ENCODE measurements at regions of chr3 and their contacts with region 1.

Region 1: DNA sequence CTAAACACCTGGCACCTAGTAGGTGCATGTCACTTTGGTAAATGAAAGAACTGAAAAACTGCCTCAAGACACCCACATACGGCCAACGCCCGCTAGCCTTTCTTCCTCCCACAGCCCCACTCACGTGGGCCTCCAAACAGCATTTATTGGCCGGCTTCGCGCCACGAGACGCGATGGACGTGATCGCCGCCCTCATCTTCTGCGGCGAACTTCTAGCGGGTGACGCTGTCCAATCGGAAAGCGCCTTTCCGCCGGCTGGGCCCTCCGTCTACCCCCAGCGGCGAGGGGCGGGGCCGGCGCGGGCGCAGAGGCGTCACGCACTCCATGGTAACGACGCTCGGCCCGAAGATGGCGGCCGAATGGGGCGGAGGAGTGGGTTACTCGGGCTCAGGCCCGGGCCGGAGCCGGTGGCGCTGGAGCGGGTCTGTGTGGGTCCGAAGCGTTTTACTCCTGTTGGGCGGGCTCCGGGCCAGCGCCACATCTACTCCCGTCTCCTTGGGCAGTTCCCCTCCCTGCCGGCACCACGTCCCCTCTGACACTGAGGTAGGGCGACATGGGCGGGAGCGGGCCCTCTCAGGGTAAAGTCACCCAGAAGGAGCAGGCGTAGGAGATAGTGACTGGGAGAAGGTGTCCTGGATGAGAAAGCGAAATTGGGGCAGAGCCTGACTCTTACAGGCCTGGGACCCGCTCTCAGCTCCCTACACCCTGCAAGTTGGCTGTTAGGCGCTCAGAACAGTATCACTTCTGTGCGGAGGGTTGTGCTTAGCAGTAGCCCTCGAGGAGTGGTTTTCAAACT is at the start of gene LMLN:
- DNase-seq: peak; percentile 97
- H3K4me3 Mint-ChIP-seq: peak within 1 kb of the TSS; percentile 86
- H3K27ac Mint-ChIP-seq: peak within 1 kb of the TSS; percentile 97
- H3K4me1 Mint-ChIP-seq: peaks cover 52% of the 10 kb centered on the region
- H3K27me3 Mint-ChIP-seq: no peaks in the 10 kb centered on the region
- total RNA-seq, gene LMLN: 3.6 to 3.8 TPM

Region 2: GRCh38 chr3:197873329-197873728 is 86.8 kb before region 1 on chr3:
- CTCF ChIA-PET with region 1: no interaction called
- POLR2A ChIA-PET with region 1: no interaction called
- intact Hi-C with region 1: no loop called
- DNase-seq: no peak
- H3K4me3 Mint-ChIP-seq: no peak overlapping the region
- H3K27ac Mint-ChIP-seq: no peak overlapping the region
- H3K4me1 Mint-ChIP-seq: peaks cover 10% of the 10 kb centered on the region
- H3K27me3 Mint-ChIP-seq: no peaks in the 10 kb centered on the region

Region 3: GRCh38 chr3:197949754-197950660 is 10.1 kb before region 1 on chr3 and contains the start of gene RPL35A:
- CTCF ChIA-PET with region 1: interaction called, 3 read pairs
- POLR2A ChIA-PET with region 1: interaction called, 14 read pairs
- intact Hi-C with region 1: loop called (anchors 1 kb)
- DNase-seq: peak; percentile 88
- H3K4me3 Mint-ChIP-seq: peak within 1 kb of the TSS; percentile 93
- H3K27ac Mint-ChIP-seq: peak within 1 kb of the TSS; percentile 97
- H3K4me1 Mint-ChIP-seq: peaks cover 43% of the 10 kb centered on the region
- H3K27me3 Mint-ChIP-seq: no peaks in the 10 kb centered on the region
- total RNA-seq, gene RPL35A: 1,575 to 1,587 TPM

Region 4: DNA sequence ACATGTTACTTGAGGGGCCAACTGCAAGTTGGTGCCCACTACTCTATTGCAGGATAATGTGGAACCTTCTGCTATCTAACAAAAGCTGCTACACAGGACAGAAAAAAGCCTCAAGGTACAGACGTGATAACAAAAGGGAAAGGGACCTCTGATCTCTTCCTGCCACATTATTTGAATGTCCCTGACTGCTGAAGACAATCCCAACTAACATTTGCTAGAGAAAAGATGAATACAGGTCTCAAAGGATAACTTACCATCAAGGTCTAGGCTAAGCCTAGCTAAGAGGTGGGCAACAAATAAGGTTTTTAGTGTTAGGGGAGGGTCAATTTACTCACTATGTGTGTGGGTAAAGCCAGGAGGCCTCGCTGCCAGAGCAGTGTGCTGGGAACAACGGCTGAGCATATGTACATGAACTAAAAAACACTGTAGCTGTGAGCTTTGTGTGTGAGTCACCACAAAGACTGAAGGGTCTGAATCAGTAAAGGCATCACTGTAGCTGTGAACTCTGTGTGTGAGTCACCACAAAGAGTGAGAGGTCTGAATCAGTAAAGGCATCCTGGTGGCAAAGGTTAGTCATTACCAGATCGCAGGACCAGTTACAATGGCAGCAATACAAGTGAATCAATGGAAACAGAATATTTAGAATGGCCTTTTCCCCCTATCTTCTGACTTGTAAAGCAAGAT is 111.6 kb after region 1 on chr3:
- CTCF ChIA-PET with region 1: no interaction called
- POLR2A ChIA-PET with region 1: interaction called, 3 read pairs
- intact Hi-C with region 1: loop called (anchors 1 kb)
- DNase-seq: peak; percentile 73
- H3K4me3 Mint-ChIP-seq: no peak overlapping the region
- H3K27ac Mint-ChIP-seq: peak overlapping the region; percentile 88
- H3K4me1 Mint-ChIP-seq: peaks cover 28% of the 10 kb centered on the region
- H3K27me3 Mint-ChIP-seq: peaks cover 7% of the 10 kb centered on the region

Region 5: DNA sequence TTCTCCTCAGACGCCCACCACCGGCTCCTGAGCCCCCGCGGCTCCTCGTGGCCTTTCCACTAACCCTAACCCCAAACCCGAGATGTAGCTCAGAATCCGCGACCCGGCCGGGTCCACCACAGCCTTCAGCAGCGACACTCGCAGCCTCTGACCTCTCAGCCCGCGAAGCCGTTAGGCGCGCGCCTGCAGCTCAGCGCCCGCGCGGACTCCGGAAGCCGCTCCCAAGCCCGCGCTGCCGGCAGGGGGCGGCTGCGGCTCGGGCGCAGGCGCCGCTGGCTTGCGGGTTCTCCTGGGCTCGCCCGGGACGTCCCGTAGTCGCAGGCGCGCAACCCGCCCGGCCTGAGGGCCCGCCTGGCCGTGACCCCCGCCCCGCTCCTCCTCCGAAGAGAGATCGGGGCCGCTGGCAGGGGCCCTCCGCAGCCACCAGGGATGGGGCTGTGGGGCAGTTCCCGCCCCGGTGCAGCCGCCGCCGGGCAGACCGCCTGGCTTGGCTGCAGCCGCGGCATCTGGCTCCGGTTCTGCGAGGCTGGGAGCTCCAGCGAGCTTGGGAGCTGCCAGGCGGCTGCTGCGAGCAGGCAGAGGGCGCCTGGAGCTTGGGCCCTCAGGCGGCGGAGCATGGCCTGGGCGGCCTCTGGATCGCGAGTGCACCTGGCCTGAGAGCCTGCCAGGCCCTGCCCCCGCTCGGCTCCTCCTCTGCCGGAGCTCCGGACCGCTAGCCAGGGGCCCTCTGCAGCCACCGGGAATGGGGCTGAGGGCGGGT is 120.6 kb after region 1 on chr3:
- CTCF ChIA-PET with region 1: interaction called, 14 read pairs
- POLR2A ChIA-PET with region 1: interaction called, 8 read pairs
- intact Hi-C with region 1: loop called (anchors 2 kb)
- DNase-seq: peak; percentile 85
- H3K4me3 Mint-ChIP-seq: peak overlapping the region; percentile 77
- H3K27ac Mint-ChIP-seq: peak overlapping the region; percentile 86
- H3K4me1 Mint-ChIP-seq: peaks cover 17% of the 10 kb centered on the region
- H3K27me3 Mint-ChIP-seq: peaks cover 38% of the 10 kb centered on the region